ENCODE measurements at regions of chr14 and their contacts with region 1.

Region 1: DNA sequence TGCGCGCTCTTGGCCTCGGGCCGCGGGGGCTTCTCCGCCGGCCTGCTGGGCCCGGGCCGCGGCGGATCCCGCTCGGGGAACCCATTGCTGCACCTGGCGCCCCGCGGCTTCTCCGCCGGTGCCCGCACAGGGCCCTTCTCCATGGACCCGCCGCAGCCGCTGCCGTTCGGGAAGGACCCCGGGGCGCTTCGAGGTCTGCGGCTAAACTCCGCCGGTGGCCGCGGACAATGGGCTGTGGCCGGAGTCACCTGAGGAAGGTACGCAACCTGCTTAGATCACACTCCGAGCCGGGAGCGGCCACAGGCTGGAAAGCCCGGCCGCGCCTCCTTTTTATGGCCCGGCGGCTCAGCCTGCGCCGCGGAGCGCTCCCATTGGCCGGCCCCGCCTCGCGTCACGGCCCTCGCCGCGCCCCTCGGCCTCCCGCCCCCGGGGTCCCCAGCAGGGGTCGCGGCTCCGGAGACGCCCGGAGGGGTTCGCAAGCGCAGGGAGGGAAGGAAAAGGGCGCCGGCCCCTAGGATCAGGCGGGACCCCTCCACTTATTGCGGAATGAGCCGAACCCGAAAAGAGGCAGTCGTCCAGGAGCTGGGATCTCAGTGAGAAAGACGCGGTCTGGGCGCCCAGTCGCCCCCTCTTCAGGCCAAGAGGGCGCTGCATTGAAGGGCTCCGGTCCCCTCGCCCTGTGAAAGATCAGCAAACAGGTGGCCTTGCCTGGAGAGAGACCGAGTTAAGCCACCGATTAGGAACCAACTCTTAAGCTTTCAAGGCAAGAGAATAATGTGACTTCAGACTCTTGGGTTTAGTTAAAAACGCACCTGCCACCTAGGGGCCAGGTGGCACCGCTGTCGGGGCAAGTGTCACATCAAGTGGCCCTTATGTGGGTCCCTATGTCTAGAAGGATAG is at the start of gene GCH1:
- DNase-seq: peak; percentile 65
- H3K4me3 ChIP-seq: peak within 1 kb of the TSS; percentile 57 to 84 (median 75)
- H3K27ac ChIP-seq: peak within 1 kb of the TSS; percentile 48
- H3K4me1 ChIP-seq: no peaks in the 10 kb centered on the region
- H3K27me3 ChIP-seq: no peaks in the 10 kb centered on the region
- CTCF ChIP-seq: peak; percentile 11 to 36
- total RNA-seq, gene GCH1: 8.8 to 11.7 TPM

Region 2: DNA sequence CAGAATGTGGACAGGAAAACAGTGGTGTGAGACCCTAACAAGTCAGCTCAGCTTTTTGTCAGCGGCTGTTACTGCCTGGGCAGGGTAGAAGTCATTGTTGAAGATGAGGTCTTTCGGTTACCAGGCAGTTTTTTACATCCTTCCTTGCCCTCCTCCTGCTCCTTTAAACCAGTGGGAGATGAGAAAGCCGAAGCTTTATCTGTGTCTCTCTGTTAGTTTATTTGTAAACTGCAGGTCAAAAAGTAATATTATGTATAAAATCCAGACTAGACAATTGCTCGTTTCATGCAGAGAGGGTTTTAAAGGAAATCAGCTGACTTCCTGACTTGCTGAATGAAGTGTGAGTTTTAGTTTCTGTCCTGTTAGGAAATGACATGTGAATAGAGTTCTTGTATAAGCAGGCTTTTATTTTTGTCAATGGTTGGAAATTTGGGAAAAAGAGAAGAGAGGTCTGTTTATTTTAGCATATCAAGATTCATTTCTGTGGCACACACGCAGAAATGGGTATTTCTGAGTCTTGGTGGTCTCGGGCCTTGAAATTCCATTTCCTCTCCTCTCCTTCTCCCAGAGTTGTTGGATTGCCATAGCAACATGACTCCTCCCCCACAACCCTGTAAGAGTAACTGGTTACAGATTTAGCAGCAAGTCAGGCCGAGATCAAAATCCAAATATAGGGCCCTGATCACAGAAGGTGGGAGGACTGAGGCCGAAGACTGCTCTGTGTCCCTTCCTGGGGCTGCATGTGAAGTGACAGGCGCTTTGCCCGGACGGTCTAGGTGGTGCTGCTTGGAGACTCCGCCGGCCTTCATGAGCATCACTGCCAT is 275.0 kb before region 1 on chr14:
- CTCF ChIA-PET with region 1: no interaction called
- dilution Hi-C with region 1: no loop called
- in situ Hi-C with region 1: no loop called
- intact Hi-C with region 1: no loop called
- DNase-seq: no peak
- H3K4me3 ChIP-seq: no peak overlapping the region
- H3K27ac ChIP-seq: no peak overlapping the region
- H3K4me1 ChIP-seq: no peaks in the 10 kb centered on the region
- H3K27me3 ChIP-seq: no peaks in the 10 kb centered on the region
- CTCF ChIP-seq: no peak

Region 3: DNA sequence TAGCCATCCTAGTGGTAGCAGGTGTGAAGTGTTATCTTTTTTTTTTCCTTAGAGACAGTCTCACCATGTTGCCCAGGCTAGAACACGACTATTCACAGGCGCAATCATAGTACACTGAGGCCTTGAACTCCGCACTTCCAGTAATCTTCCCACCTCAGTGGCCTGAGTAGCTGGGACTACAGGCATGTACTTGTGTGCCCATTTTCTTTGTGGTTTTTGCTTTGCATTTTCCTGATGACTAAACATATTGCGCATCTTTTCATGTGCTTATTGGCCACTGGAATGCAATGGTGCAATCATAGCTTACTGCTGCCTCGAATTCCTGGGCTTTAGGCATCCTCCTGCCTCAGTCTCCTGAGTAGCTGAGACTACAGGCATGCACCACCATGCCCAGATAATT is 33.2 kb after region 1 on chr14:
- CTCF ChIA-PET with region 1: no interaction called
- dilution Hi-C with region 1: no loop called
- in situ Hi-C with region 1: no loop called
- intact Hi-C with region 1: no loop called
- DNase-seq: peak; percentile 87
- H3K4me3 ChIP-seq: no peak overlapping the region
- H3K27ac ChIP-seq: no peak overlapping the region
- H3K4me1 ChIP-seq: peaks cover 10% of the 10 kb centered on the region
- H3K27me3 ChIP-seq: no peaks in the 10 kb centered on the region
- CTCF ChIP-seq: peak in 1 of 2 donors; percentile 3

Region 4: GRCh38 chr14:54976316-54976715 is 73.5 kb after region 1 on chr14:
- CTCF ChIA-PET with region 1: no interaction called
- dilution Hi-C with region 1: no loop called
- in situ Hi-C with region 1: no loop called
- intact Hi-C with region 1: loop called (anchors 5 kb)
- DNase-seq: peak; percentile 72
- H3K4me3 ChIP-seq: no peak overlapping the region
- H3K27ac ChIP-seq: no peak overlapping the region
- H3K4me1 ChIP-seq: peaks cover 11% of the 10 kb centered on the region
- H3K27me3 ChIP-seq: no peaks in the 10 kb centered on the region
- CTCF ChIP-seq: no peak

Region 5: DNA sequence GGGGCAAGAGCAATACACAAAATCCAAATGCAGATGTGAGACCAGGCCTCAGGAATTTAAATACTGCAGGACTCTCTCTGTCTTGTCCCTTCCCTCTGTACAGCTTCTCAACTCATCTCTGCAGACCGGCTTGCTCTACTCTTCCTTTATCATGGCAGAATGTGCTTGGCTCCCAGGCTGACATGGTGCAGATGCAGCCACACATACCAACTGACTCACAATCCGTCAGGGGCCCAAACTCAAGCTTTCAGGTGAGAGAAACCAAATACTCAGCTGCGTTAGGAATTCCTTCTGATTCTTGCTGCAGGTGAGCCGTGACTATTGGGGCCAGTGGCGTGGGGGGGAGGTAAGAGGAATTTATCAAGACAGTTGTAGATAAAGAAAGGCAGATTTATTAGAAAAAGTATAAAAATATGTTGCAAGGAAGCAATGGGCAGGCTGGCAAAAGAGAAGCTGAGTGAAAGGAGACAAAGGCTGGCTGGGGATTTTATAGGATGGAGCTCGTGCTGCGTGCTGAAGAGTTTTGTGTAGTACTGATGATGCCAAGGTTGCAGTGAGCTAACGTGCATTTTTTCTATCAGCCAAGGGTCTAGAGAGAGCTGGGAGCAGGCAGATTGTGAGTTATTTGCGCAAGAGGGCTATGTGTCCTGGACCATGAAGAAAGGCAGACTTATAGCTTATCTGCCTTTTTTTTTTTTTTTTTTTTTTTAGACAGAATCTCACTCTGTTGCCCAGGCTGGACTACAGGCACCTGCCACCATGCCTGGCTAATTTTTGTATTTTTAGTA is 221.3 kb after region 1 on chr14:
- CTCF ChIA-PET with region 1: interaction called, 12 read pairs
- dilution Hi-C with region 1: no loop called
- in situ Hi-C with region 1: no loop called
- intact Hi-C with region 1: no loop called
- DNase-seq: no peak
- H3K4me3 ChIP-seq: no peak overlapping the region
- H3K27ac ChIP-seq: no peak overlapping the region
- H3K4me1 ChIP-seq: peaks cover 32% of the 10 kb centered on the region
- H3K27me3 ChIP-seq: no peaks in the 10 kb centered on the region
- CTCF ChIP-seq: no peak

Region 6: GRCh38 chr14:55191203-55192053 is 288.7 kb after region 1 on chr14 and contains the start of gene DLGAP5:
- CTCF ChIA-PET with region 1: no interaction called
- dilution Hi-C with region 1: no loop called
- in situ Hi-C with region 1: no loop called
- intact Hi-C with region 1: no loop called
- DNase-seq: peak; percentile 97
- H3K4me3 ChIP-seq: peak within 1 kb of the TSS; percentile 59 to 94 (median 80)
- H3K27ac ChIP-seq: peak within 1 kb of the TSS; percentile 77
- H3K4me1 ChIP-seq: peaks cover 10% of the 10 kb centered on the region
- H3K27me3 ChIP-seq: no peaks in the 10 kb centered on the region
- CTCF ChIP-seq: no peak
- total RNA-seq, gene DLGAP5: 0.50 to 33.9 TPM

Measured in mammary epithelial cell (primary cell).